MCF 10A (cell line): ENCODE measurements at regions of chr18 and their contacts with region 1.

Region 1: DNA sequence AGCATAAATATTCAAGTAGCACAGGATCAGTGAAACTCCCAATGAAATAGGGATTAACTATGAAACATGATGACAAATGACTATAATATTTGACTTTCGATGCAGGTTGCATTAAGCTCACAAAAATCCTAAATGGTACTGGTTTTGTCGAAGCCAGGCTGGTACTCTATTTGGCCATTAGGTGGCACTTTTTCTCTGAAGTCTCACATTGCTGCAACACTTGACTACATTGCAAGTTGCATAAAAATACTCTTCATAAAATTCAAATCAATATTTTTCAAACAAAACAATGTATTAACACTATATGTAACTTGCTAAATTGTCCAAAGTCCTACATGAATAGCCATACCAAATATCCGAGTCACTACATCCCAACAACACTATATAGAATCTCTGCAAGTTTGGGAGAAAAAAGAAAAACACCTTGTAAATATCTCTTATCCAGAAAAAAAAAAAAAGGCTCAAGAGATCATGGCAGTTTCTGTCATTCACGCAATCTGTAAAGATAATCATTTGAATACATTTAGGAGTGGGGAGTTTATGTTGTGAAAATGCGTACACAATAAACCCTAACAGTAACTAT is 9.5 kb downstream of the RTTN start:
- DNase-seq: peak; percentile 63
- H3K4me3 Mint-ChIP-seq: no peak overlapping the region
- H3K27ac Mint-ChIP-seq: no peak overlapping the region
- H3K4me1 Mint-ChIP-seq: no peaks in the 10 kb centered on the region
- H3K27me3 Mint-ChIP-seq: no peaks in the 10 kb centered on the region
- CTCF ChIP-seq: peak; percentile 78

Region 2: DNA sequence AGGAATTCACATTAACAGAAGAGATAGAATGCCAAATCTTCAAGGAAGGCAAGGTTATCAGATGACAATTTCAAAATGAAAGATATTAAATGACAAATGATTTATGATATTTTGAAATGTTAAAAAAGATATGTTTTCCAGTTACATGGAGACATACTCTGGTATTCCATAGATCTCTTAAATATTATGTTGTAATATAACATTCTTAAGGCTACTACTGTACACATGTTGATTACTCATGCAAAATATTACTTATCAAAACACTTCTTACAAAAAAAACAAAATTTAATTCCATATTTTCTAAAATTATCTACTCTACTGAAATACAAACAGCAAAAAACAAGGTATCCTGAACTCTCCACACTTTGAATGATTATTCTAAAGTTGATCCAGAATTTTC is 13.4 kb before region 1 on chr18:
- CTCF ChIA-PET with region 1: interaction called, 45 read pairs
- POLR2A ChIA-PET with region 1: no interaction called
- intact Hi-C with region 1: no loop called
- DNase-seq: peak; percentile 2
- H3K4me3 Mint-ChIP-seq: no peak overlapping the region
- H3K27ac Mint-ChIP-seq: no peak overlapping the region
- H3K4me1 Mint-ChIP-seq: peaks cover 17% of the 10 kb centered on the region
- H3K27me3 Mint-ChIP-seq: no peaks in the 10 kb centered on the region
- CTCF ChIP-seq: no peak

Region 3: DNA sequence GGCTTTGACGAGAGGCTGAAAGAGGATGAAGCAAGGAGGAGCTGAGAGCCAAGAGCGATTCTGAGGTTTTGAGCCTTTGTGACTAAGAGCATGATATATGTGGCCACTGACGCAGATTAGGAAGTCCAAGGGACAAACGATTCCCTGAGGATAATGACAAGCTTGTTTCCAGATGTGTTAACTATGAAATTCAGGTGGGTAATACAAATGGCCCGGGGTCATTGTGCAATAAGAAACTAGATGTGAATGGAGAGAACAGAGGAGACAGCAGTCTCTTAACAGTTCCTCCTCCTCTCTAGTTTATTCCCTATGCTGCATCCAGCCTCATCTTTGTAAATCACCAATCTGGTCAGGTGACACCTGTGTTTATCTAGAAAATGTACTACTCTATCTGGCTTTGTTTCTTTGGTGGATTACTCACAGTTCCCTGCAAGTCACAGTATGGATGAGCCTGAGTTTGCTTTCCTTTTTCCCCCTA is 177.1 kb after region 1 on chr18:
- CTCF ChIA-PET with region 1: interaction called, 11 read pairs
- POLR2A ChIA-PET with region 1: no interaction called
- intact Hi-C with region 1: no loop called
- DNase-seq: peak; percentile 95
- H3K4me3 Mint-ChIP-seq: peak overlapping the region; percentile 11
- H3K27ac Mint-ChIP-seq: peak overlapping the region; percentile 46
- H3K4me1 Mint-ChIP-seq: peaks cover 40% of the 10 kb centered on the region
- H3K27me3 Mint-ChIP-seq: no peaks in the 10 kb centered on the region
- CTCF ChIP-seq: no peak

Region 4: GRCh38 chr18:70421471-70422390 is 225.8 kb after region 1 on chr18:
- CTCF ChIA-PET with region 1: interaction called, 11 read pairs
- POLR2A ChIA-PET with region 1: interaction called, 8 read pairs
- intact Hi-C with region 1: no loop called
- DNase-seq: peak; percentile 97
- H3K4me3 Mint-ChIP-seq: peak overlapping the region; percentile 26
- H3K27ac Mint-ChIP-seq: peak overlapping the region; percentile 87
- H3K4me1 Mint-ChIP-seq: peaks cover 53% of the 10 kb centered on the region
- H3K27me3 Mint-ChIP-seq: no peaks in the 10 kb centered on the region
- CTCF ChIP-seq: no peak

Region 5: DNA sequence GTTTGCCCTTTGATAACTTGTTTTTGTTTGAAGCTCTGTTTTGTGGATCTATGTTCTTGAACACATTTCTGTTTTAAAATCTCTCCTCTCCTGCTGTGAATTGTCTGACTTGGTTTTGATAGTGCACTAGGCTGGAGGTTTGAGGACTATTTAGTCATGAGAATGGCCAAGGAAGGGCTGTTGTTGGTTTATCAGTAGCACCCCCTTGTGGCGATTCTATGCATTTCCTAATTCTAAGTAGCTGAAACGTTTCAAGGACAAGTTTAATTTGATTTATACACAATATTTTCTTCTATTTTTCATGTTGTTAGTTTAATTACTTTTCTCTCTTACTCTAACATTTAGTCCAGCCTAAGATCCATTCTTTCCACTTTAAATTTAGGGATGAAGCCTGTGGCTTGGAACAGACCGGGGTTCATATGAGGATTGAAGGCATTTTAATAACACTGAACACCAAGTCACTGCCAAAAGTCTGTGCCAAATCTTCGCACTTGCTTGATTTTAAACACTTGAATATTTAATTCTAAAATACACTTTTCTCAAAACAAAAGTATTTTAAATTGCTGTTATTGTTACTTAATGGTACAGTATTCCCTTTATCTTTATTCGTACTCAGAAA is 258.9 kb after region 1 on chr18:
- CTCF ChIA-PET with region 1: interaction called, 174 read pairs
- POLR2A ChIA-PET with region 1: no interaction called
- intact Hi-C with region 1: loop called (anchors 1 kb)
- DNase-seq: peak; percentile 78
- H3K4me3 Mint-ChIP-seq: no peak overlapping the region
- H3K27ac Mint-ChIP-seq: no peak overlapping the region
- H3K4me1 Mint-ChIP-seq: no peaks in the 10 kb centered on the region
- H3K27me3 Mint-ChIP-seq: no peaks in the 10 kb centered on the region
- CTCF ChIP-seq: peak; percentile 77